ENCODE measurements at regions of chr20 and their contacts with region 1.

Region 1: DNA sequence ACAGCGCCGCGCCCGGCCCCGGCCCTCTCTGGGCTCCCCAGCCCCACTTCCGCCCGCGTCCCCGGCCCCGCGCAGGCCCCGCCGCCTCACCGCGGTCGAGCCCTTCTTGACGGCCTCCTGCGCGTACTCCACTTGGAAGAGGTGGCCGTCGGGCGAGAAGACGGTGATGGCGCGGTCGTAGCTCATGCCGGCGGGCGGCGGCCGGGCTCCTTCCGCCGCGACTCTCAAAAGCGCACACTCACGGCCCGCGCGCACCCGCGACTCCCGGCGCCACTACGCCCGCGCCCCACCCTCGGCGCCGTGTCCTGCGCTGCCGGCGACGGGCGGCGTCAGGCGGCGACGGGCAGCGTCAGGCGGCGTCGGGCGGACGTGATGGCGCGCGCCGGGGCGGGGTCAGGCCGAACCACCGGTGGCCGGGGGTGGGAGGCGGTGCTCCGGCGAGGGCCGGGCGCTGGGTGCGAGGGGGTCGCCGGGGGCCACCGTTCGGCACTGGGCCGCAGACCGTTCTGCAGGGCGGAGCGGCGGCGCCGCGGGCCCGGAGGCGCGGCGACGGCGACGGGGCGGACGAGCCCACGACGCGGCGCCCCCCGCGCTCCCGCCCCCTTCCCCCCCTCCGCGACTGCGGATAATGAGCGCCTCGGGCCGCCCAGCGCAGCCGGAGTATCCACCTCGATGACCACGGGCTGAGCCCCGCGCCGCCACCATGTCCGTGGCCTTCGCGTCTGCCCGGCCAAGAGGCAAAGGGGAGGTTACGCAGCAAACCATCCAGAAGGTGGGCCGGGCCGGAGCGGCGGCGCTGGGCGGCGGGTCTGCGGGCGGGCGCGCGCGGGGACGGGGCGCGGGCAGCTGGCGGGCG is at the starts of genes PSMA7 and SS18L1:
- DNase-seq: peak; percentile 93 to 98
- H3K4me3 ChIP-seq: peak within 1 kb of the TSS; percentile 70
- H3K4me3 Mint-ChIP-seq: peak within 1 kb of the TSS; percentile 91
- H3K27ac Mint-ChIP-seq: peak within 1 kb of the TSS; percentile 94
- H3K4me1 ChIP-seq: peaks cover 23% of the 10 kb centered on the region
- H3K4me1 Mint-ChIP-seq: peaks cover 25% of the 10 kb centered on the region
- H3K27me3 ChIP-seq: no peaks in the 10 kb centered on the region
- H3K27me3 Mint-ChIP-seq: no peaks in the 10 kb centered on the region
- CTCF ChIP-seq: no peak
- total RNA-seq, gene PSMA7: 702 and 760 TPM in 2 replicates
- total RNA-seq, gene SS18L1: 46.4 and 52.1 TPM in 2 replicates

Region 2: DNA sequence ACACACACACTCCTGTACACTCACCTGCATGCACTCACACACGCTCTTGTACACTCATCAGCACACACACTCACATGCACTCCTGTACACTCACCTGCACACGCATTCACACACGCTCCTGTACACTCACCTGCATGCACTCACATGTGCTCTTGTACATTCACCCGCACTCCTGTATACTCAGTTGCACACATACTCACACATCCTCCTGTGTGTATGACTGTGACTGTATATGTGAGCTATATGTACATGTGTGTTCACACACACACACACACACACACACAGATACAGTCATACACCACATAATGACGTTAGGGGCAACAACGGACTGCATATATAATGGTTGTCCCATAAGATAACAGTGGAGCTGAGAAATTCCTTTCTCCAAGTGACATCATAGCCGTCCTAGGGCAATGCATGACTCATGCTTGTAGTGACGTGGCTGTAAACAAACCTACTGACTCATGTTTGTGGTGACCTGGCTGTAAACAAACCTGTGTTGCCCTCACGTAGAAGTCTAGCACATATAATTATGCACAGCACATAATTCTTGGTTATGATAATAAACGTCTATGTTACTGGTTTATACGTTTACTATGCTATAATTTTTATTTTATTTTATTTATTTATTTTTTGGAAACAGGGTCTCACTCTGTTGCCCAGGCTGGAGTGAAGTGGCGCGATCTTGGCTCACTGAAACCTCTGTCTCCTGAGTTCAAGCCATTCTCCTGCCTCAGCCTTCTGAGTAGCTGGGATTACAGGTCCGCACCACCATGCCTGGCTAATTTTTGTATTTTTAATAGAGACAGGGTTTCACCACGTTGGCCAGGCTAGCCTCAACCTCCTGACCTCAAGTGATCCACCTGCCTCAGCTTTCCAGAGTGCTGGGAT is 54.9 kb before region 1 on chr20:
- CTCF ChIA-PET with region 1: no interaction called
- POLR2A ChIA-PET with region 1: no interaction called
- intact Hi-C with region 1: no loop called
- DNase-seq: peak; percentile 52 to 66
- H3K4me3 ChIP-seq: no peak overlapping the region
- H3K4me3 Mint-ChIP-seq: no peak overlapping the region
- H3K27ac Mint-ChIP-seq: no peak overlapping the region
- H3K4me1 ChIP-seq: no peaks in the 10 kb centered on the region
- H3K4me1 Mint-ChIP-seq: no peaks in the 10 kb centered on the region
- H3K27me3 ChIP-seq: no peaks in the 10 kb centered on the region
- H3K27me3 Mint-ChIP-seq: peaks cover 7% of the 10 kb centered on the region
- CTCF ChIP-seq: no peak

Region 3: GRCh38 chr20:62121776-62122631 is 21.3 kb before region 1 on chr20 and contains the start of gene LSM14B:
- CTCF ChIA-PET with region 1: interaction called, 5 read pairs
- POLR2A ChIA-PET with region 1: interaction called, 4 read pairs
- intact Hi-C with region 1: loop called (anchors 1 kb)
- DNase-seq: peak; percentile 99 to 100
- H3K4me3 ChIP-seq: peak within 1 kb of the TSS; percentile 96
- H3K4me3 Mint-ChIP-seq: peak within 1 kb of the TSS; percentile 76
- H3K27ac Mint-ChIP-seq: peak within 1 kb of the TSS; percentile 65
- H3K4me1 ChIP-seq: peaks cover 19% of the 10 kb centered on the region
- H3K4me1 Mint-ChIP-seq: peaks cover 28% of the 10 kb centered on the region
- H3K27me3 ChIP-seq: no peaks in the 10 kb centered on the region
- H3K27me3 Mint-ChIP-seq: peaks cover 10% of the 10 kb centered on the region
- CTCF ChIP-seq: no peak
- total RNA-seq, gene LSM14B: 143 and 154 TPM in 2 replicates

Region 4: DNA sequence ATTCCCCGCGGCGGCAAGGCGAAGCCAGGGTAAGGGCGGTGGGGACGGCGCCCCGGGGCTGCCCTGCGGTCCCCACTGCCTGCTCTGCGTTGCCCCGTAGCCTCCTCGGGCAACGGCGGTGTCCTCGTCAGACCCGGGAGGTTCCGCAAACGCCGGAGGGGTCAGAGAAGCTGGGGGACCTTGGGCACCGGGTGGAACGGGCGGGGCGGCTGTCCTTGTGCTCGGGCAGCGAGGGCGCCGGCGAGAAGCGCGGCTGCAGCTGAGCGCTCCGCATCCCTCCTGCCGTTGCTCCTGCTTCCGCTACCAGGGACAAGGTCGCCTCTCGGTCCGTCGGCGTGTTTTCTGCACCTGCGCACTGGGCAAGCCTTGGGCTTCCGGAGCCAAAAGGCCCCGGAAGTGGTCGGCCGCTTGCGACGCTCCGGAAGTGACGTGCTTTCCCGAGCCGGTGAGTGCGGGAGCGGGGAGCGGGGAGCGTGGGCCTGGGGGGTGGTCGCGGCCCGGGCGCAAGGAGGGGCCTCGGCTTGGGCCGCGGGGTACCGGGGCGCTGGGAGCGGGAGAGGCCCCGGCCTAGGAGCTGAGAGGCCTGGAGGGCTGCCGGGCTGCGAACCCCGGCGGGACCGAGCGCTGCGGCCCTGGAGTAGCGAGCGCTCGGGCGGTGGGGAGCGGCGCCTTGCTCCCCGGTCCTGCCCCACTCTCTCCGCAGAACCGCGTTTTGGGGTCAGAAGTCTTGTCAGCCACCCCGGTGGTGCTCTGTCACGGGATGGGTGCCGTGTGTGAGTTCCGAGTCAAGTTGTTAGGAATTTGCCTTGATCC is 39.5 kb after region 1 on chr20 and contains the start of gene MTG2:
- CTCF ChIA-PET with region 1: no interaction called
- POLR2A ChIA-PET with region 1: no interaction called
- intact Hi-C with region 1: loop called (anchors 1 kb)
- DNase-seq: peak; percentile 100
- H3K4me3 ChIP-seq: peak within 1 kb of the TSS; percentile 80
- H3K4me3 Mint-ChIP-seq: peak within 1 kb of the TSS; percentile 96
- H3K27ac Mint-ChIP-seq: peak within 1 kb of the TSS; percentile 99
- H3K4me1 ChIP-seq: peaks cover 24% of the 10 kb centered on the region
- H3K4me1 Mint-ChIP-seq: peaks cover 31% of the 10 kb centered on the region
- H3K27me3 ChIP-seq: no peaks in the 10 kb centered on the region
- H3K27me3 Mint-ChIP-seq: no peaks in the 10 kb centered on the region
- CTCF ChIP-seq: no peak
- total RNA-seq, gene MTG2: 110 and 111 TPM in 2 replicates

Region 5: DNA sequence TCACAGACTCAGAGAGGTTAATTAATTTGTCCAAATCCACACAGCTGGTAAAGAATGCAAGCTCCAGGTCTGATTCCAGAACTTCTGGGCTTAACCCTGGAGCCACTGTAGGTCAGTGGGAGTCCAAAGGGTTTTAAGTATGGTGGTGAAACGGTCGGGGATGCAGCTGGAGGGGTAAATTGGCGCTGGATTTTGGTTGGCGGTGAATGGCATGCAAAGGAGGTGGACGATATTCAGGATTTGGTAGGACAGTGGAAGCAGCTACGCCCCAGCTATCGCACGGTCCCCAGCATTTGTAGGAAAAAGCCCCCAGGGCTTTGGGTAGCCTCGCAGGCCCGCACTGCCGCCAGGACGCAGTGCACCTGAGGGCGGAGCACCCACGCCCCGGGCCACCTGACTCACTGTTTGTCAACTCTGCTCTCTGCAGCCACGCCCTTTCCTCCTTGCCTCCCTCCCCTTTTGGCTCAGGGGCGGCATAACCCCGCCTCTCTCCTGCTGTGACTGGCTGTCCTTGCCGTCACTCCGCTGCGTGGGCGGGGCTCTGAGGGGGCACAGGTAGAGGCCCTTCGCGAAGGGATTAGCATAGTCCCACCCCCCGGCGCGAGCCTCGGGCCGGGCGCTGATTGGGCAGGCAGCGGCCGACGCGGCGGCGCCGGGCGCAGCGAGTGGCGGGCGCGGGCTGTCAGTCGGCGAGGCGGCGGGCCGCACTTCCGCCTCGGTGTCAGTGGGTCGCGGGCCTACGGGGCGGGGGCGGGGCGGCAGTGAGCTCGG is 94.6 kb after region 1 on chr20 and contains the start of gene OSBPL2:
- CTCF ChIA-PET with region 1: no interaction called
- POLR2A ChIA-PET with region 1: interaction called, 3 read pairs
- intact Hi-C with region 1: loop called (anchors 5 kb)
- DNase-seq: peak; percentile 100
- H3K4me3 ChIP-seq: peak within 1 kb of the TSS; percentile 89
- H3K4me3 Mint-ChIP-seq: peak within 1 kb of the TSS; percentile 67
- H3K27ac Mint-ChIP-seq: peak within 1 kb of the TSS; percentile 85
- H3K4me1 ChIP-seq: peaks cover 11% of the 10 kb centered on the region
- H3K4me1 Mint-ChIP-seq: peaks cover 7% of the 10 kb centered on the region
- H3K27me3 ChIP-seq: no peaks in the 10 kb centered on the region
- H3K27me3 Mint-ChIP-seq: no peaks in the 10 kb centered on the region
- CTCF ChIP-seq: no peak
- total RNA-seq, gene OSBPL2: 130 and 132 TPM in 2 replicates

Region 6: GRCh38 chr20:62407221-62407992 is 264.1 kb after region 1 on chr20 and contains the start of gene CABLES2:
- CTCF ChIA-PET with region 1: no interaction called
- POLR2A ChIA-PET with region 1: no interaction called
- intact Hi-C with region 1: loop called (anchors 10 kb)
- DNase-seq: peak; percentile 99 to 100
- H3K4me3 ChIP-seq: peak within 1 kb of the TSS; percentile 95
- H3K4me3 Mint-ChIP-seq: peak within 1 kb of the TSS; percentile 78
- H3K27ac Mint-ChIP-seq: peak within 1 kb of the TSS; percentile 83
- H3K4me1 ChIP-seq: peaks cover 58% of the 10 kb centered on the region
- H3K4me1 Mint-ChIP-seq: peaks cover 41% of the 10 kb centered on the region
- H3K27me3 ChIP-seq: no peaks in the 10 kb centered on the region
- H3K27me3 Mint-ChIP-seq: no peaks in the 10 kb centered on the region
- CTCF ChIP-seq: peak in 1 of 2 experiments; percentile 54
- total RNA-seq, gene CABLES2: 30.7 and 36.4 TPM in 2 replicates

Region 7: GRCh38 chr20:62590301-62591121 is 447.2 kb after region 1 on chr20:
- CTCF ChIA-PET with region 1: no interaction called
- POLR2A ChIA-PET with region 1: no interaction called
- intact Hi-C with region 1: no loop called
- DNase-seq: no peak
- H3K4me3 ChIP-seq: no peak overlapping the region
- H3K4me3 Mint-ChIP-seq: no peak overlapping the region
- H3K27ac Mint-ChIP-seq: no peak overlapping the region
- H3K4me1 ChIP-seq: no peaks in the 10 kb centered on the region
- H3K4me1 Mint-ChIP-seq: no peaks in the 10 kb centered on the region
- H3K27me3 ChIP-seq: peaks cover 2% of the 10 kb centered on the region; the same call in 1 of the 2 replicates
- H3K27me3 Mint-ChIP-seq: peaks cover 15% of the 10 kb centered on the region
- CTCF ChIP-seq: no peak

Measured in Caco-2 (cell line).